B cell (primary cell): ENCODE measurements at regions of chr14 and their contacts with region 1.

Region 1: GRCh38 chr14:68307014-68307789 is 485.7 kb downstream of the ZFP36L1 start:
- DNase-seq: no peak
- ATAC-seq: no peak
- H3K4me3 ChIP-seq: no peak overlapping the region
- H3K4me3 Mint-ChIP-seq: no peak overlapping the region
- H3K27ac ChIP-seq: no peak overlapping the region
- H3K27ac Mint-ChIP-seq: no peak overlapping the region
- H3K4me1 ChIP-seq: peaks cover 54 to 56% of the 10 kb centered on the region in 2 donors
- H3K4me1 Mint-ChIP-seq: peaks cover 63% of the 10 kb centered on the region
- H3K27me3 ChIP-seq: no peaks in the 10 kb centered on the region
- H3K27me3 Mint-ChIP-seq: no peaks in the 10 kb centered on the region
- CTCF ChIP-seq: no peak

Region 2: GRCh38 chr14:68191567-68192321 is 115.5 kb before region 1 on chr14:
- CTCF ChIA-PET with region 1: no interaction called
- POLR2A ChIA-PET with region 1: no interaction called
- intact Hi-C with region 1: no loop called
- DNase-seq: no peak
- ATAC-seq: no peak
- H3K4me3 ChIP-seq: no peak overlapping the region
- H3K4me3 Mint-ChIP-seq: no peak overlapping the region
- H3K27ac ChIP-seq: no peak overlapping the region
- H3K27ac Mint-ChIP-seq: no peak overlapping the region
- H3K4me1 ChIP-seq: no peaks in the 10 kb centered on the region
- H3K4me1 Mint-ChIP-seq: no peaks in the 10 kb centered on the region
- H3K27me3 ChIP-seq: no peaks in the 10 kb centered on the region
- H3K27me3 Mint-ChIP-seq: no peaks in the 10 kb centered on the region
- CTCF ChIP-seq: no peak

Region 3: DNA sequence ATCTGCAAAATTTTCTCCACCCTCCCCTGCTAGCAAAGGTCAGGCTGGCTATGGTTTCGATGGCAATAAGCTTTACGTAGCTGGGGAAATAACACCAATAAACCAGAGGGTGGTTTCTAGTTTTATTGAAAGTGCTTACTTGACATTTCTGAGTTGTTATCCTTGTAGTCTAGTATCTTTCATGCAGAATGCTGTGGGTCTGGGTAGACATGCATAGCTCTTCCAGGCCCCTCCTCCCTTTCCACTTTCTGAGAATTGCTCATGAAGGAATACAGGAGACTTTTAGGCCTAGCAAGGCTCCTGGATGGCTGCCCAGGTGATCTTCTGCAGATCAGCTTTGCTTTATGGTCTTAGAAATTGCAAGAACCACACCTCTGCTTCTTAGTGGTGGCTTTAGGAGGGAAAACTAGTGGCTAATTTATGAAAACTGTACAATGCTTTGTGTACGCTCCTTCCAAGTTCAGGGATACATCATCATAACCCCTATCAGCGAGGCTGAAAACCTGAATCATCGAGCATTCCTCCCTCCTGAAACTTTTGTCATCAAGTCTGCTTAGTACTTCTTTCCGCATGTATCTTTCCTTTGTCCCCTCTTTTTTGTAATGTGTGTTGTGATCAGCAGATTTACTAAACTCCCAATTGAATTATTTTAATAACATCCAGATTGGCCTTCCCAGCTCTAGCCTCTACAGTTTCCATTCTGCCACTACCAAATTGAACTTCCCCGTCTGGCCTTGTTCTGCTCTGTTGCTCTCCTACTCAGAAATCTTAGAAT is 14.6 kb before region 1 on chr14:
- CTCF ChIA-PET with region 1: interaction called, 5 read pairs
- POLR2A ChIA-PET with region 1: interaction called, 3 read pairs
- intact Hi-C with region 1: loop called (anchors 1 kb)
- DNase-seq: no peak
- ATAC-seq: peak; percentile 46
- H3K4me3 ChIP-seq: peak overlapping the region in 1 of 5 experiments; percentile 21
- H3K4me3 Mint-ChIP-seq: peak overlapping the region; percentile 62
- H3K27ac ChIP-seq: peak overlapping the region; percentile 70 to 85
- H3K27ac Mint-ChIP-seq: peak overlapping the region; percentile 93
- H3K4me1 ChIP-seq: peaks cover 60 to 68% of the 10 kb centered on the region in 2 donors
- H3K4me1 Mint-ChIP-seq: peaks cover 69% of the 10 kb centered on the region
- H3K27me3 ChIP-seq: no peaks in the 10 kb centered on the region
- H3K27me3 Mint-ChIP-seq: no peaks in the 10 kb centered on the region
- CTCF ChIP-seq: no peak

Region 4: GRCh38 chr14:68341411-68342212 is 34.4 kb after region 1 on chr14:
- CTCF ChIA-PET with region 1: interaction called, 4 read pairs
- POLR2A ChIA-PET with region 1: no interaction called
- intact Hi-C with region 1: loop called (anchors 5 kb)
- DNase-seq: no peak
- ATAC-seq: peak; percentile 36
- H3K4me3 ChIP-seq: no peak overlapping the region
- H3K4me3 Mint-ChIP-seq: no peak overlapping the region
- H3K27ac ChIP-seq: no peak overlapping the region
- H3K27ac Mint-ChIP-seq: peak overlapping the region; percentile 27
- H3K4me1 ChIP-seq: peaks cover 39 to 43% of the 10 kb centered on the region in 2 donors
- H3K4me1 Mint-ChIP-seq: peaks cover 69% of the 10 kb centered on the region
- H3K27me3 ChIP-seq: no peaks in the 10 kb centered on the region
- H3K27me3 Mint-ChIP-seq: no peaks in the 10 kb centered on the region
- CTCF ChIP-seq: no peak